ENCODE measurements at regions of chr1 and their contacts with region 1.

Region 1: DNA sequence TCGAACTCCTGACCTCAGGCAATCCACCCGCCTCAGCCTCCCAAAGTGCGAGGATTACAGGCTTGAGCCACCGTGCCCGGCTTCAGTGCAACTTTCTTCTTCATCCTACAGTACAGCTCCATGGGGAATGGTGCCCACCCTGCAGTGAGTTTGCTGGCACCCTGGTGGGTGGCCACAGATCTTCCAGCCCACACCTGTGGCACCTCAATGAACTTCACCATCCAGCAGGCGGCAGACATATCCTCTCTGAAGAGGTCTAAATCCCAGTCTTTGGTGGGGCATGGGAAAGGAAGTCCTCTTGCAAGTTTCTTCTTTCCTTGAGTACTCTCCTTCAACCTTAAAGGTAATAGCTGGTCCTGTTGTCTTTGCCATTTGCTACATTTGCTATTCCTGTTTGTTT is 18.1 kb upstream of the ZBTB8A start:
- DNase-seq: no peak
- H3K4me3 ChIP-seq: peak overlapping the region; percentile 62; the same call in 1 of the 2 replicates
- H3K27ac ChIP-seq: no peak overlapping the region
- H3K4me1 ChIP-seq: peaks cover 6% of the 10 kb centered on the region; the same call in 1 of the 2 replicates
- H3K27me3 ChIP-seq: no peaks in the 10 kb centered on the region
- CTCF ChIP-seq: no peak

Region 2: GRCh38 chr1:30984165-30984889 is 1536.8 kb before region 1 on chr1:
- CTCF ChIA-PET with region 1: interaction called, 15 read pairs
- POLR2A ChIA-PET with region 1: no interaction called
- intact Hi-C with region 1: no loop called
- DNase-seq: no peak
- H3K4me3 ChIP-seq: no peak overlapping the region
- H3K27ac ChIP-seq: no peak overlapping the region; the same call in 1 of the 2 replicates
- H3K4me1 ChIP-seq: no peaks in the 10 kb centered on the region
- H3K27me3 ChIP-seq: no peaks in the 10 kb centered on the region
- CTCF ChIP-seq: no peak

Region 3: GRCh38 chr1:32406629-32407111 is 114.5 kb before region 1 on chr1:
- CTCF ChIA-PET with region 1: interaction called, 15 read pairs
- POLR2A ChIA-PET with region 1: no interaction called
- intact Hi-C with region 1: no loop called
- DNase-seq: peak; percentile 40 to 91
- H3K4me3 ChIP-seq: no peak overlapping the region
- H3K27ac ChIP-seq: peak overlapping the region; percentile 38
- H3K4me1 ChIP-seq: peaks cover 23% of the 10 kb centered on the region
- H3K27me3 ChIP-seq: no peaks in the 10 kb centered on the region
- CTCF ChIP-seq: no peak

Region 4: GRCh38 chr1:32557812-32558211 is 36.6 kb after region 1 on chr1:
- CTCF ChIA-PET with region 1: interaction called, 10 read pairs
- POLR2A ChIA-PET with region 1: no interaction called
- intact Hi-C with region 1: no loop called
- DNase-seq: no peak
- H3K4me3 ChIP-seq: no peak overlapping the region
- H3K27ac ChIP-seq: no peak overlapping the region
- H3K4me1 ChIP-seq: no peaks in the 10 kb centered on the region
- H3K27me3 ChIP-seq: no peaks in the 10 kb centered on the region
- CTCF ChIP-seq: no peak

Region 5: GRCh38 chr1:32773018-32773763 is 252.0 kb after region 1 on chr1:
- CTCF ChIA-PET with region 1: interaction called, 13 read pairs
- POLR2A ChIA-PET with region 1: no interaction called
- intact Hi-C with region 1: no loop called
- DNase-seq: peak; percentile 72 to 85
- H3K4me3 ChIP-seq: no peak overlapping the region
- H3K27ac ChIP-seq: peak overlapping the region; percentile 51; the same call in 1 of the 2 replicates
- H3K4me1 ChIP-seq: peaks cover 62% of the 10 kb centered on the region
- H3K27me3 ChIP-seq: no peaks in the 10 kb centered on the region
- CTCF ChIP-seq: peak; percentile 96